CD4-positive, alpha-beta memory T cell (primary cell): ENCODE measurements at regions of chr11 and their contacts with region 1.

Region 1: GRCh38 chr11:96054870-96055705 is 131.2 kb upstream of the MTMR2 start:
- DNase-seq: peak in 4 of 5 donors; percentile 31 to 41 (median 36)
- H3K4me3 ChIP-seq: no peak overlapping the region
- H3K4me3 Mint-ChIP-seq: no peak overlapping the region
- H3K27ac ChIP-seq: no peak overlapping the region
- H3K27ac Mint-ChIP-seq: peak overlapping the region in 5 of 7 donors; percentile 19 to 81 (median 65)
- H3K4me1 ChIP-seq: no peaks in the 10 kb centered on the region
- H3K4me1 Mint-ChIP-seq: peaks cover 23 to 40% (median 39%) of the 10 kb centered on the region in 4 donors
- H3K27me3 ChIP-seq: no peaks in the 10 kb centered on the region
- H3K27me3 Mint-ChIP-seq: no peaks in the 10 kb centered on the region

Region 2: DNA sequence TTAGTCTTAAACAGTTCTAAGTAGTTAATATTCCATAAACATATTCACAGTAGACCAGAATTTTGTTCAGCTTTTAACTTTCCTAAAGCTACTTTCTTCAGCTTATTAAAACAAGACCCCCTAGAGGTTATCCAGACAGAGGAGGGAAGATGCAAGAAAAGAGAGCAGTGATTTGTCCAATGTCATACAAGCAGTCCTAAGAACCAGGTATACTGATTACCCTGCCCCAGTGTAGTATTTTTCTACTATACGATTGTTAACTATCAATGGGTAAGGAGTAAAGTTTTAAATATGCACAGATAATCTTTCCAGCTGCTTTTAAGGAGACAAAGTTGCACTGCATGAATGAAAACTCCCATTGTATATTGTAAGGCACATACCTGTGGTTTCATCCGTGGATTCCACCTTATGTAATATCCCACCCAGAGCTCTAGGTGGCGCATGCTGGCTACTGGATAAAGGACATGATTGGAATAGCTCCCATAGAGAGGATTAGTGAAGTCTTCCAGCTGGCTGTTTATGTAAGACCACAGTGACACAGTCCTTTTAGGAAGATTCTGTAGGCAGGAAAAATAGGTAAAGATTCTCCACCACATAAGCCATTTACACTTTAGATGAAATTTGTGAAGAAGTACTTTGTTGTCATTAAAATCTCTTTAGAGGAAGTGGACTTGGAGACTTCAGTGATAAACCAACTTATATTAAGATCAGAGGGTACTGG is 219.2 kb before region 1 on chr11:
- CTCF ChIA-PET with region 1: interaction called, 11 read pairs
- POLR2A ChIA-PET with region 1: no interaction called
- intact Hi-C with region 1: loop called (anchors 10 kb)
- DNase-seq: peak; percentile 55 to 64 (median 55)
- H3K4me3 ChIP-seq: no peak overlapping the region
- H3K4me3 Mint-ChIP-seq: no peak overlapping the region
- H3K27ac ChIP-seq: no peak overlapping the region
- H3K27ac Mint-ChIP-seq: peak overlapping the region in 4 of 7 donors; percentile 1 to 75 (median 51)
- H3K4me1 ChIP-seq: no peaks in the 10 kb centered on the region
- H3K4me1 Mint-ChIP-seq: peaks cover 0 to 3% (median 1%) of the 10 kb centered on the region in 4 donors
- H3K27me3 ChIP-seq: no peaks in the 10 kb centered on the region
- H3K27me3 Mint-ChIP-seq: no peaks in the 10 kb centered on the region

Region 3: DNA sequence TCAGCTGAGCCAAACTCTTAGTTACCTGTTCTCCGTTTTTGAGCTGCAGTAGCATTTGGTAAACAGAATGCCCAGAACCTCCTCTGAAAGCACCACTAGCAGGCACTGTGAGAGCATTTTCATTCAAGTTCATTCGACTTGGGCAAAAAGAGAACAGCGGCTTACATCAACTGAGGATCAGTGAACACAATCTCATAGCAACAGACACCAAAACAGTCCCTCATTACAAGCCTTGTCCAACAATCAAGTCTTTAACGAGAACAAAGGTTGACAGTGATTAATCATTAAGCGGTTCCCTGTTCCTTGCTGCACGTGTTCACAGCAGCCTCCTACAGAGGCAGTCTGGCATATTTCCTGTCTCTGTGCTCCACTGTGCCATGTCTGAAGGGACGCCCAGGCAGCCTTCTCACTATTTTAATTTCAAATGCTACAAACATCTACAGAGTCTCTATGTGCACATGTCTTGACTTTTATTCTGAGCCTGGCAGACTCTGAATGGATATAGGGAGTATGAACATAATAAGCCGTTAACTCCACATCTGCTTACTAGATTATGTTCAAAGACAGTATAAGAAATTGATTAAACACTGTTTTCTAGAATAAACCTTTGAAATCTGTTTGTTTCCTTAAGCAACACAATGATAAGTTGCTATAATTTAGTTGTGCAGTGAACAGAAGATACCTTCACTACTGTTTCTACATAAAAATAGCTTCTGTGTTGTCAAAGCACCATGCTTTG is 42.8 kb before region 1 on chr11:
- CTCF ChIA-PET with region 1: interaction called, 8 read pairs
- POLR2A ChIA-PET with region 1: interaction called, 4 read pairs
- intact Hi-C with region 1: loop called (anchors 1 kb)
- DNase-seq: peak; percentile 64 to 89 (median 75)
- H3K4me3 ChIP-seq: no peak overlapping the region
- H3K4me3 Mint-ChIP-seq: peak overlapping the region in 7 of 8 donors; percentile 22 to 83 (median 63)
- H3K27ac ChIP-seq: peak overlapping the region; percentile 44
- H3K27ac Mint-ChIP-seq: peak overlapping the region; percentile 64 to 97 (median 93)
- H3K4me1 ChIP-seq: peaks cover 59% of the 10 kb centered on the region
- H3K4me1 Mint-ChIP-seq: peaks cover 9 to 64% (median 52%) of the 10 kb centered on the region in 4 donors
- H3K27me3 ChIP-seq: no peaks in the 10 kb centered on the region
- H3K27me3 Mint-ChIP-seq: no peaks in the 10 kb centered on the region

Region 4: GRCh38 chr11:96075532-96075959 is 20.5 kb after region 1 on chr11:
- CTCF ChIA-PET with region 1: interaction called, 10 read pairs
- POLR2A ChIA-PET with region 1: interaction called, 4 read pairs
- intact Hi-C with region 1: no loop called
- DNase-seq: no peak
- H3K4me3 ChIP-seq: no peak overlapping the region
- H3K4me3 Mint-ChIP-seq: peak overlapping the region in 5 of 8 donors; percentile 19 to 63 (median 53)
- H3K27ac ChIP-seq: no peak overlapping the region
- H3K27ac Mint-ChIP-seq: peak overlapping the region; percentile 10 to 81 (median 26)
- H3K4me1 ChIP-seq: peaks cover 24% of the 10 kb centered on the region
- H3K4me1 Mint-ChIP-seq: peaks cover 33 to 55% (median 46%) of the 10 kb centered on the region in 4 donors
- H3K27me3 ChIP-seq: no peaks in the 10 kb centered on the region
- H3K27me3 Mint-ChIP-seq: no peaks in the 10 kb centered on the region

Region 5: GRCh38 chr11:96242971-96243647 is 188.0 kb after region 1 on chr11:
- CTCF ChIA-PET with region 1: interaction called, 11 read pairs
- POLR2A ChIA-PET with region 1: no interaction called
- intact Hi-C with region 1: loop called (anchors 2 kb)
- DNase-seq: peak; percentile 65 to 89 (median 68)
- H3K4me3 ChIP-seq: peak overlapping the region; percentile 33 to 57
- H3K4me3 Mint-ChIP-seq: peak overlapping the region; percentile 85 to 93 (median 90)
- H3K27ac ChIP-seq: peak overlapping the region; percentile 63
- H3K27ac Mint-ChIP-seq: peak overlapping the region; percentile 88 to 97 (median 93)
- H3K4me1 ChIP-seq: peaks cover 47% of the 10 kb centered on the region
- H3K4me1 Mint-ChIP-seq: peaks cover 28 to 57% (median 48%) of the 10 kb centered on the region in 4 donors
- H3K27me3 ChIP-seq: no peaks in the 10 kb centered on the region
- H3K27me3 Mint-ChIP-seq: no peaks in the 10 kb centered on the region